Mammary epithelial cell (primary cell): ENCODE measurements at regions of chr1 and their contacts with region 1.

Region 1: DNA sequence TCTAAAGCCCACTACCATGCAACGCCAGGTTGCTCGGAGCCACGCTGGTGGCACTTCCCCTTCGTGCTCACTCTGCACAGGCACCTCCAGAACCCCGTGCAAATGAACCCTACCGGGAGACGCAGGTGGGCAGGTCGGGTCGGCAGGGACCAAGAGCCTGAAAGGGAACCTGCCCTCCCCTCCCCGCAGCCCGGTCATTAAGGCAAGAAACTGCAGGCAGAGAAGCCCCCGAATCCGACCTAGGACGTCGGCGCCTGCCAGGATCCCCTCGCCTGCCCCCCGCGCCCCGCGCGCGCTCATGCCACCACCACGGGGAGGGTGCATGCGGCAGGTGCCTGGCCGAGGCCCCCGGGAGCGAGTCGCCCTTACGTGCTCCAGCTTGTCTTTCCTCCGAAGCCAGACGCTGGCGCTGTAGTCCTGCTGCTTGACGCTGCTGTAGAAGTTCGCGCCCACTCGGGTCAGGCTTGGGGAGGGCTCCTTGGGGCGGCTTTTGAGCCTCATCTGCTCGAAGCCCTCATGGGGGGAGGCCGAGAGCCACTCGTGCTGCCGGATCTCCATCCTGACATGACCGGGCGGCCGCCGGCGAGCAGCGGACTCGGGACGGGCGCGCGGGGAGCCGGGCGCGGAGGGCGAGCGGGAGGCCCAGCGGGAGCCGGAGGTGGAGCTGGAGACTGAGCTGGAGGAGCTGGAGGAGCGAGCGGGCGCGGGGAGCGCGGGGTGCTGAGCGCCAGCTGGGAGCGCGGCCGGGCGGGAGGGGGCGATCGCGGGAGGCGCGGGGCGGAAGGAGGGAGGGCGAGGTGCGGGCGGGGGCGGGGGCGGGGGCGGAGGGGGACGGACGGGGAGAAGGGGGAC is 552 bp downstream of the PLD5 start:
- DNase-seq: peak; percentile 75
- H3K4me3 ChIP-seq: peak overlapping the region; percentile 74 to 92 (median 85)
- H3K27ac ChIP-seq: peak overlapping the region; percentile 34
- H3K4me1 ChIP-seq: peaks cover 27% of the 10 kb centered on the region
- H3K27me3 ChIP-seq: no peaks in the 10 kb centered on the region
- CTCF ChIP-seq: peak; percentile 15 to 58

Region 2: GRCh38 chr1:241834733-241835377 is 689.1 kb before region 1 on chr1:
- CTCF ChIA-PET with region 1: no interaction called
- dilution Hi-C with region 1: no loop called
- in situ Hi-C with region 1: no loop called
- intact Hi-C with region 1: no loop called
- DNase-seq: no peak
- H3K4me3 ChIP-seq: no peak overlapping the region
- H3K27ac ChIP-seq: no peak overlapping the region
- H3K4me1 ChIP-seq: peaks cover 11% of the 10 kb centered on the region
- H3K27me3 ChIP-seq: no peaks in the 10 kb centered on the region
- CTCF ChIP-seq: peak; percentile 76 to 82

Region 3: DNA sequence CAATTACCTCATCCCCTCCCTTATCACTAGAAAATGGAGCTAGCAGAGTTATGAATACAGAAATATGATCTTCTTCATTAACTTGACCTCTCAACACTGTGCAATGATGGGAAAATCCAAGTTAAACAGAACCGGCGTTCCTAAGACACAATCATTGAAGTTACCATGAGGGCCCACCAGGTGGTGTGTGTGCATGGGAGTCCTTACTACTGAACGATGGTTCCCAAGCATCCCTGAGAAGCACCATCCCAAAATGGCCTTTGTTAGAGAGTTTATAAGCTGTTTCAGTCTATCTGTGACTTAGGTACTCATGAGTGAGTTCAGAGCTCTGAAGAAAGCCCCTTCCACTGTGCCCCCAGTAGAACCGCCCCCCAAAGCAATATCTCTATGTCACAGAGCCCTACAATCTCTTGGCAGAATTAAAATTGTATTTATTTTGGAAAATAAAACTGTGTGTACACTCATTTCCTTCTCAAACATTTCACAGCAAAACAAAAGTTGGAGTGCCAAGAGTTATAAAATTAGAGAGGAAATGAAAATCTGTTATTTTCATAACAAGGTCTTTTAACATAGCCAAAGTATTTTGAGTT is 56.3 kb before region 1 on chr1:
- CTCF ChIA-PET with region 1: no interaction called
- dilution Hi-C with region 1: no loop called
- in situ Hi-C with region 1: no loop called
- intact Hi-C with region 1: loop called (anchors 5 kb)
- DNase-seq: peak; percentile 50
- H3K4me3 ChIP-seq: no peak overlapping the region
- H3K27ac ChIP-seq: no peak overlapping the region
- H3K4me1 ChIP-seq: no peaks in the 10 kb centered on the region
- H3K27me3 ChIP-seq: no peaks in the 10 kb centered on the region
- CTCF ChIP-seq: peak; percentile 81 to 82

Region 4: DNA sequence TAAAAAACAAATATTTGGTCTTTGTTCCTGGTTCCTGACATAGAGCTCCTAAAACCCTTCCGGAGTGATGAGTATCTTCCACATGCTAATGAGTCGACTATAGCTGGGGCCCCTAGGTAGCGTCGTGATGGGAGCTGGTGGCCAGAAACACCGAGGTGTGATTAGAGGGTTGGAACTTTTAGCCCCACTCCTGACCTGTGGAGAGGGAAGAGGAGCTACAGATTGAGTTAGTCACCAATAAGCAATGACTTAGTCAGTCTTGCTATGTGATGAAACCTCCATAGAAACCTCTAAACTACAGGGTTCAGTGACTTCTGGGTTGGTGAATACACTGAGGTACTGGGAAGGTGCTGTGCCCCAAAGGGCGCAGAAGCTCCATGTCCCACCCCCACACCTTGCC is 30.6 kb after region 1 on chr1:
- CTCF ChIA-PET with region 1: no interaction called
- dilution Hi-C with region 1: no loop called
- in situ Hi-C with region 1: no loop called
- intact Hi-C with region 1: no loop called
- DNase-seq: peak; percentile 54
- H3K4me3 ChIP-seq: no peak overlapping the region
- H3K27ac ChIP-seq: no peak overlapping the region
- H3K4me1 ChIP-seq: peaks cover 19% of the 10 kb centered on the region
- H3K27me3 ChIP-seq: no peaks in the 10 kb centered on the region
- CTCF ChIP-seq: no peak

Region 5: DNA sequence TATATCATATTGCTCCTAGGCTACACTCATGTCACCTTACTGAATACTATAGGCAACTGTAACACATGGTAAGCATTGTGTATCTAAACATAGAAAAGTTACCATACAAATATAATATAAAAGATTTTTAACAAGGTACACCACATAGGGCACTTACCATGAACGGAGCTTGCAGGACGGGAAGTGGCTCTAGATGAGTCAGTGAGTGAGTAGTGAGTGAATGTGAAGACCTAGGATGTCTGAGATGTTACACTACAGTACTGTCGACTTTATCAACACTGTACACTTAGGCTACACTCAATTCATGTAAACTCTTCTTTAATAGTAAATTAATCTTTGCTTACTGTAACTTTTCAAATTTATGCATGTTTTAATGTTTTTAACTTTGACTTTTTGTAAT is 81.6 kb after region 1 on chr1:
- CTCF ChIA-PET with region 1: interaction called, 11 read pairs
- dilution Hi-C with region 1: no loop called
- in situ Hi-C with region 1: no loop called
- intact Hi-C with region 1: no loop called
- DNase-seq: peak; percentile 76
- H3K4me3 ChIP-seq: no peak overlapping the region
- H3K27ac ChIP-seq: no peak overlapping the region
- H3K4me1 ChIP-seq: peaks cover 23% of the 10 kb centered on the region
- H3K27me3 ChIP-seq: no peaks in the 10 kb centered on the region
- CTCF ChIP-seq: no peak

Region 6: DNA sequence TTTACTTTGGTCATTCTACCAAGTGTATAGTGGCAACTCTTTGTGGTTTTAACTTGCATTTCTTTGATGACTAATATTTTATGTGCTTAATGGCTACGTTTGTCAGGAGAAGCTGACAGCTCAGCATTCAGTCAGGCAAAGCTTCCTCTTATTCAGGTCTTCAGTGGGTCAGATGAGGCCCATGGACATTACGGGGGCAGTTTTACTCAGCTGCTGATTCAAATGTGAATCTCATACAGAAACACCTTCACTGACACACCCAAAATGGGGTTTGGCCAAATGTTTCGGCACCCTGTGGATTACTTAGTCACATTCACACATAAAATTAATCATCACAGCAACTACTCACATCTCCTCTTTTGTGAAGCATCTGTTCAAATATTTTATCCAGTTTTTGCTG is 105.5 kb after region 1 on chr1:
- CTCF ChIA-PET with region 1: no interaction called
- dilution Hi-C with region 1: no loop called
- in situ Hi-C with region 1: loop called in 1 of 2 experiments (anchors 5 kb)
- intact Hi-C with region 1: loop called (anchors 5 kb)
- DNase-seq: peak; percentile 99
- H3K4me3 ChIP-seq: no peak overlapping the region
- H3K27ac ChIP-seq: peak overlapping the region; percentile 53
- H3K4me1 ChIP-seq: peaks cover 12% of the 10 kb centered on the region
- H3K27me3 ChIP-seq: no peaks in the 10 kb centered on the region
- CTCF ChIP-seq: no peak

Region 7: GRCh38 chr1:242634732-242635131 is 110.8 kb after region 1 on chr1:
- CTCF ChIA-PET with region 1: no interaction called
- dilution Hi-C with region 1: no loop called
- in situ Hi-C with region 1: loop called in 1 of 2 experiments (anchors 5 kb)
- intact Hi-C with region 1: loop called (anchors 5 kb)
- DNase-seq: no peak
- H3K4me3 ChIP-seq: no peak overlapping the region
- H3K27ac ChIP-seq: no peak overlapping the region
- H3K4me1 ChIP-seq: peaks cover 1% of the 10 kb centered on the region
- H3K27me3 ChIP-seq: no peaks in the 10 kb centered on the region
- CTCF ChIP-seq: no peak

Region 8: GRCh38 chr1:242641461-242641860 is 117.5 kb after region 1 on chr1:
- CTCF ChIA-PET with region 1: interaction called, 12 read pairs
- dilution Hi-C with region 1: no loop called
- in situ Hi-C with region 1: no loop called
- intact Hi-C with region 1: loop called (anchors 1 kb)
- DNase-seq: no peak
- H3K4me3 ChIP-seq: no peak overlapping the region
- H3K27ac ChIP-seq: no peak overlapping the region
- H3K4me1 ChIP-seq: no peaks in the 10 kb centered on the region
- H3K27me3 ChIP-seq: no peaks in the 10 kb centered on the region
- CTCF ChIP-seq: no peak

Region 9: DNA sequence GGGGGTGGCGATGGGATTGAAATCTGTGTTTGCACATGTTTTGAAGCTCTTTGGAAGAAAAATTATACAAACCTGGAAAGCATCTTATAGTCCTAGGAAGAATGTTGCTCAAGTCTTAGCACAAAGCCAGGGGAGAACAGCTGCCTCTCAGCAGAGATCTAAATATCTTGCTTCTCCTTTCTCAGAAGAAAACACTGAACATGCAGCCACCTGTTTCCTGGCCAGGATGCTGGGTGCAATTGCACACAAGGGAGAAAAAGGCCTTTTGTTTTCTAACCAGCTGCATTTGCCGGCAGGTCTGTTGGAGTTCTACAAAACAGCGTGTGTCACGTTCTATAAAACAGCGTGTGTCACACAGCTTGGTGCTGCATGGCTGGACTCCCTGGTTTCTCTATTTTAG is 260.1 kb after region 1 on chr1:
- CTCF ChIA-PET with region 1: interaction called, 3 read pairs
- dilution Hi-C with region 1: no loop called
- in situ Hi-C with region 1: no loop called
- intact Hi-C with region 1: loop called (anchors 5 kb)
- DNase-seq: peak; percentile 32
- H3K4me3 ChIP-seq: no peak overlapping the region
- H3K27ac ChIP-seq: no peak overlapping the region
- H3K4me1 ChIP-seq: no peaks in the 10 kb centered on the region
- H3K27me3 ChIP-seq: peaks cover 5% of the 10 kb centered on the region
- CTCF ChIP-seq: no peak